K562 (cell line): ENCODE measurements at regions of chr3 and their contacts with region 1.

Region 1: DNA sequence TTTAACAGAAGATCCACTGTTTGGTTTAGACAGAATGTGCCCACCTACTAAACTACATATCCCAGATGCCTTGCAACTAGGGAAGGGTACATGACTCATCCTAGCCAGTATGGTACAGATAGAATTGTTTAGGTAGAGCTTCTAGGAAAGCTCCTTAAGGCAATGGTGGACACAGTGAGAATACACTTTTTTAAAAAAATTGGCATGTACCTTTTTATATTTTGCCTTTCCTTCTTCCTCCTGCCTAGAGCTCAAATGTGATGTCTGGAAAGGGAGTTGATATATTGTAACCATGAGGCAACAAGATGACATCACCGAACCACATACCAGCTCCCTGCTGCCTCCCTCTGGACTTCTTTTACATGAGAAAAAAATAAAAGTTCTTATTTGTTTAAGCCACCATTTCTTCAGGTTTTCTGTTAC is 14.4 kb upstream of the C3orf80 start:
- DNase-seq: peak in 2 of 4 experiments; percentile 23 to 31
- ATAC-seq: peak; percentile 90
- H3K4me3 ChIP-seq: no peak overlapping the region
- H3K27ac ChIP-seq: no peak overlapping the region
- H3K4me1 ChIP-seq: no peaks in the 10 kb centered on the region
- H3K27me3 ChIP-seq: peaks cover 3 to 5% of the 10 kb centered on the region in 2 experiments; a peak in 3 of 5 replicates
- CTCF ChIP-seq: peak; percentile 23 to 54 (median 31); a peak in 3 of 6 replicates
- EP300 ChIP-seq: peak; percentile 39; the same call in 1 of the 2 replicates
- POLR2A ChIP-seq: no peak
- RAD21 ChIP-seq: peak; percentile 71 to 73

Region 2: GRCh38 chr3:161230621-161231171 is 1019.9 kb after region 1 on chr3:
- CTCF ChIA-PET with region 1: no interaction called
- POLR2A ChIA-PET with region 1: no interaction called
- in situ Hi-C with region 1: loop called (anchors 25 kb)
- intact Hi-C with region 1: no loop called
- DNase-seq: no peak
- ATAC-seq: peak; percentile 23; the same call in 1 of the 3 replicates
- H3K4me3 ChIP-seq: no peak overlapping the region
- H3K27ac ChIP-seq: no peak overlapping the region
- H3K4me1 ChIP-seq: no peaks in the 10 kb centered on the region; a peak in 1 of 5 replicates
- H3K27me3 ChIP-seq: no peaks in the 10 kb centered on the region
- CTCF ChIP-seq: no peak
- EP300 ChIP-seq: no peak
- POLR2A ChIP-seq: no peak
- RAD21 ChIP-seq: no peak